Activated CD4-positive, alpha-beta T cell treated with anti-CD3 and anti-CD28 coated beads for 36 hours (primary cell): ENCODE measurements at regions of chr17 and their contacts with region 1.

Region 1: GRCh38 chr17:8173056-8173870 is 2.9 kb downstream of the TMEM107 start:
- DNase-seq: peak; percentile 91
- ATAC-seq: peak; percentile 87
- H3K4me3 Mint-ChIP-seq: peak overlapping the region; percentile 78
- H3K27ac Mint-ChIP-seq: peak overlapping the region; percentile 96
- H3K4me1 Mint-ChIP-seq: peaks cover 40% of the 10 kb centered on the region
- H3K27me3 Mint-ChIP-seq: no peaks in the 10 kb centered on the region

Region 2: GRCh38 chr17:7644775-7645174 is 528.5 kb before region 1 on chr17:
- CTCF ChIA-PET with region 1: no interaction called
- POLR2A ChIA-PET with region 1: no interaction called
- intact Hi-C with region 1: no loop called
- DNase-seq: peak; percentile 18
- ATAC-seq: peak; percentile 79
- H3K4me3 Mint-ChIP-seq: no peak overlapping the region
- H3K27ac Mint-ChIP-seq: no peak overlapping the region
- H3K4me1 Mint-ChIP-seq: peaks cover 10% of the 10 kb centered on the region
- H3K27me3 Mint-ChIP-seq: peaks cover 12% of the 10 kb centered on the region

Region 3: GRCh38 chr17:8125157-8125946 is 47.9 kb before region 1 on chr17:
- CTCF ChIA-PET with region 1: interaction called, 5 read pairs
- POLR2A ChIA-PET with region 1: interaction called, 52 read pairs
- intact Hi-C with region 1: loop called in 1 of 2 experiments (anchors 1 kb)
- DNase-seq: peak; percentile 92
- ATAC-seq: peak; percentile 16
- H3K4me3 Mint-ChIP-seq: peak overlapping the region; percentile 90
- H3K27ac Mint-ChIP-seq: peak overlapping the region; percentile 79
- H3K4me1 Mint-ChIP-seq: peaks cover 51% of the 10 kb centered on the region
- H3K27me3 Mint-ChIP-seq: peaks cover 19% of the 10 kb centered on the region

Region 4: DNA sequence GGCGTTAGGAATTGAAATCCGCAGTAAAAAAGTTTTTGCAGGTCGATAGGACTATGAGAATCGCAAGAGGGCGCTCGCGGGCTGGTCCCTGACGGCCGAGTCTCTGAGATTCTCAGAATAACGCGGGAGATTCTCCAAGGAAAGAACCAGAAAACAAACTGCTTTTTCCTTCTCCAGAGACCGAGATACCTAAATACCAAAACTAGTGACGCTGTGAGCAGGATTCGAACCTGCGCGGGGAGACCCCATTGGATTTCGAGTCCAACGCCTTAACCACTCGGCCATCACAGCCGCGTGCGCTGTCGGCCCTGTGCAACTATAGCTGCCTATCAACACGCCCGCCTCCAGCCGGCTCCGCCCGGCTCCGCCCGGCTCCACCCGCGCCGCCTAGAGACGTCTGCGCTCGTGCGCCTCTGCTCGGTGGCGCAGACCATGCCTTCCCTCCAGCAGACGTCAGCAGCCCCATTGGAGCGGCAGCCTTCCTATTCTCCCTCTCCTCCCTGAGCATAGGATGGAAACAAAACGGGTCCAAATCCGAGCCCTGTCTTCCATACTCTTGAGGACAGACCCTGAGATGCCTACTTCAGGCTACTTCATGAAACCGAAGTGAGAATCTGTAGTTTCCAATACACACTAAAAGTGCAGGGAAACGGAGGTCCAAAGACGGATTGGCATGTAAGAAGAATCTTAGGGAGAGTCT is 34.4 kb before region 1 on chr17:
- CTCF ChIA-PET with region 1: interaction called, 6 read pairs
- POLR2A ChIA-PET with region 1: interaction called, 29 read pairs
- intact Hi-C with region 1: loop called in 1 of 2 experiments (anchors 1 kb)
- DNase-seq: peak; percentile 98
- ATAC-seq: peak; percentile 90
- H3K4me3 Mint-ChIP-seq: no peak overlapping the region
- H3K27ac Mint-ChIP-seq: no peak overlapping the region
- H3K4me1 Mint-ChIP-seq: no peaks in the 10 kb centered on the region
- H3K27me3 Mint-ChIP-seq: no peaks in the 10 kb centered on the region

Region 5: GRCh38 chr17:8151123-8151640 is 22.1 kb before region 1 on chr17:
- CTCF ChIA-PET with region 1: interaction called, 3 read pairs
- POLR2A ChIA-PET with region 1: interaction called, 85 read pairs
- intact Hi-C with region 1: loop called (anchors 1 kb)
- DNase-seq: peak; percentile 93
- ATAC-seq: peak; percentile 35
- H3K4me3 Mint-ChIP-seq: no peak overlapping the region
- H3K27ac Mint-ChIP-seq: peak overlapping the region; percentile 80
- H3K4me1 Mint-ChIP-seq: peaks cover 30% of the 10 kb centered on the region
- H3K27me3 Mint-ChIP-seq: no peaks in the 10 kb centered on the region

Region 6: GRCh38 chr17:8162233-8162996 is 10.8 kb before region 1 on chr17 and contains the start of gene VAMP2:
- CTCF ChIA-PET with region 1: interaction called, 11 read pairs
- POLR2A ChIA-PET with region 1: interaction called, 99 read pairs
- intact Hi-C with region 1: loop called (anchors 1 kb)
- DNase-seq: peak; percentile 92
- ATAC-seq: peak; percentile 47
- H3K4me3 Mint-ChIP-seq: peak within 1 kb of the TSS; percentile 85
- H3K27ac Mint-ChIP-seq: peak within 1 kb of the TSS; percentile 96
- H3K4me1 Mint-ChIP-seq: peaks cover 57% of the 10 kb centered on the region
- H3K27me3 Mint-ChIP-seq: no peaks in the 10 kb centered on the region
- total RNA-seq, gene VAMP2: 26.7 to 27.8 TPM

Region 7: DNA sequence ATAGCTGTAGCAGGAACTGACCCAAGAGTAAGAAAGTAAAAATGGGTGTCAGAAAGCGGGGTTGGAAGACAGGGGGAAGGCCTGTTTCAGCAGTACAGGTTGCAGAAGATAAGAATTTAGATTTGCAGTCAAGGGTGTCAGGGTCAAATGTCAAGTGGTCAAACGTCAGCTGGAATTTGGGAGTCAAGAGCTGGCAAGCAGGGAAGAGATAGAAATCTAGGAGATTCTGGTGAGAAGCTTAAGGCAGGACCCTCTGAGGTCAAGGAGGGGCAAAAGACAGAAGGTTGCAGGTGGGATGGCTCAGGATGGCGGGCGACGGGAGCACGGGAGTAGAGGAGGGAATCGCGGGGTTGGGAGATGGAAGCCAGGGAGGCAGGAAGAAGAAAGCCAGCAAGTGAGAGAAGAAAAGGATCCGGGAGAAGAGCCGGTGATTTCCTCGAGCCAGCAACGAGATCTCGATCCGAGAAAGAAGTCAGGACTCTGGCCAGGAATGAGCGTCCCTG is 121.6 kb after region 1 on chr17:
- CTCF ChIA-PET with region 1: no interaction called
- POLR2A ChIA-PET with region 1: interaction called, 19 read pairs
- intact Hi-C with region 1: loop called in 1 of 2 experiments (anchors 1 kb)
- DNase-seq: no peak
- ATAC-seq: no peak
- H3K4me3 Mint-ChIP-seq: peak overlapping the region; percentile 76
- H3K27ac Mint-ChIP-seq: peak overlapping the region; percentile 90
- H3K4me1 Mint-ChIP-seq: peaks cover 17% of the 10 kb centered on the region
- H3K27me3 Mint-ChIP-seq: no peaks in the 10 kb centered on the region